ENCODE measurements at regions of chr15 and their contacts with region 1.

Region 1: GRCh38 chr15:76196269-76197231 is 114.7 kb downstream of the ETFA start:
- DNase-seq: no peak
- H3K4me3 Mint-ChIP-seq: no peak overlapping the region
- H3K27ac Mint-ChIP-seq: no peak overlapping the region
- H3K4me1 Mint-ChIP-seq: no peaks in the 10 kb centered on the region
- H3K27me3 Mint-ChIP-seq: peaks cover 2% of the 10 kb centered on the region

Region 2: DNA sequence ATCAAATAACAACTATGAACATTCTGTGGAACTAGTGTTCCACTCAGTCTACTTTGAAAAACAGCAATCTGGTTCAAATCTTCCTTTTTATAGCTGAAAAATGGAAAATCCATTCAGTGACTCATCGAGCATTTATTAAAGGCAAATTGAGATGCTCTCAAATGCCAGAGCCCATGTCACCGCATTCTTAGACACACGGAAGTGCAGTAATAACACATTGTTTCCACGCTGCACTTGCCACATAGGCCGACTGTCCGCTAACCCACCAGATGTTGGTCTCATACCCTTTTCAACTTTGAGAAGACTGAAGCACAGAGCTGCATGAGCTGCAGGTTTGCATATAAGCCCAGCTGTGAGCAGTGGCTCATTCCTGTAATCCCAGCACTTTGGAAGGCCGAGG is 40.8 kb before region 1 on chr15:
- intact Hi-C with region 1: no loop called
- DNase-seq: no peak
- H3K4me3 Mint-ChIP-seq: no peak overlapping the region
- H3K27ac Mint-ChIP-seq: no peak overlapping the region
- H3K4me1 Mint-ChIP-seq: peaks cover 7% of the 10 kb centered on the region
- H3K27me3 Mint-ChIP-seq: no peaks in the 10 kb centered on the region

Region 3: DNA sequence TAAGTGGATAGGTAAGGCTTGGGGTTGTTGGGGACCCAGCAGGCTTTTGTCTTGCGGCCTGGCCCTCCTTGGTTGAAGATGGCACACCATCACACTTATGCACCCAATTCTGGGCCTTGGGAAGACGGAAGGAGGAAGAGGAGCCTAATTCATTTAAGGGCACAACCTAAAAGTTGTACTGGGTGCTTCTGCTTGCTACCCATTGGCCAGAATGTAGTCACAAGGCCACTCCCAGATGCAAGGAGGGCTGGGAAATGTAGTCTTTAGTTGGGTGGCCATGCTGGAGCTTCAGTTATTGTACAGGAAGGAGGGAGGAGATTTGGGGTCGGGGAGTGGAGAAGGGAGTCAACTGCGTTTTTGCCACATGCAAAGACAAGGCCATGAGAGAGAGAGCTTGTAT is 27.5 kb before region 1 on chr15:
- intact Hi-C with region 1: no loop called
- DNase-seq: no peak
- H3K4me3 Mint-ChIP-seq: no peak overlapping the region
- H3K27ac Mint-ChIP-seq: no peak overlapping the region
- H3K4me1 Mint-ChIP-seq: no peaks in the 10 kb centered on the region
- H3K27me3 Mint-ChIP-seq: peaks cover 8% of the 10 kb centered on the region

Region 4: DNA sequence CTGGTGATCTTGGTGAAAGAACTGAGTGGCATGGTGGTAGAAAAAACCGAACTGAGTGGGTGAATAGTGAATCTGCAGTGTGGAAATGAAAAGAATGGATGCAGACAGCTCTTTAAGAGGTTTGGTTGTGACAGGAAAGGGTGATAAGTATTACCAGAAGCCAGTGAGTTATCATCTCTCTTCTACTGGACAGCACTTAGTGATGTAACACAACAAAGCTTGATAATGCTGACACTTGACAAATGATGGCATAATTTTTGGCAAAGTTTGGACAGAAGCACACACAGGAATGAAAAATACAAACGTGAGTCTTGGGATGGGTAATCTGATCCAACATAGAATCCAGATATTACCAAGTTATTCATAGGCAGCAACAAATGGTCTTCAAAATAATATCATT is 252.2 kb after region 1 on chr15:
- intact Hi-C with region 1: no loop called
- DNase-seq: no peak
- H3K4me3 Mint-ChIP-seq: no peak overlapping the region
- H3K27ac Mint-ChIP-seq: no peak overlapping the region
- H3K4me1 Mint-ChIP-seq: no peaks in the 10 kb centered on the region
- H3K27me3 Mint-ChIP-seq: no peaks in the 10 kb centered on the region

Region 5: DNA sequence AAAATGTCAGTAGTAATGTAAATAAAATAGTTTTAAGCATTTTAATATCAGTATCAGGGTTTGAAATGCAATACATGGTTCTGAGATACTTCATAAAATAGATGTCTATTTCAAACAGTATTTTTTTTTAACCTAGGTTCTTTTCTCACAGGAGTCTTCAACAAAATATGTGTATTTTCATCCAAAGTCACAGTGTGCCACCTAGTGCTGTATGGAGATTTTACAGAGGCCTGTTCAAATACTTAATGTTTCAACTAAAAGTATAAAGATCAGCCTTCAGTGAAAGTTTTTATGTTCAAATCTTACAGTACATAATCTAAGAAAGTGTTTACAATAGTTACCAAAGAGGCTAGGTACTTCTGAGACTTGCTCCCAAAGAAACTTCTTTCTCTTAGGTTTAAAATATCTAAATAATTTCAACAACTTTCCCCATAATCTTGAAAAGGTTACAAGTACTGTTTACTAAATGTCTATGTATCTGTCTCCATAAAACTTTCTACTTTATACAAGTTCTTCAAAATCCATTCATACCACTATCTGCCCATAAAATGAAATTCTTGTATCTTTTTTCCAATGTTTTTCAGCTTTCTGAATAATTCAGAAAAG is 670.3 kb after region 1 on chr15:
- intact Hi-C with region 1: loop called (anchors 5 kb)
- DNase-seq: no peak
- H3K4me3 Mint-ChIP-seq: no peak overlapping the region
- H3K27ac Mint-ChIP-seq: no peak overlapping the region
- H3K4me1 Mint-ChIP-seq: peaks cover 24% of the 10 kb centered on the region
- H3K27me3 Mint-ChIP-seq: peaks cover 2% of the 10 kb centered on the region